Naive thymus-derived CD4-positive, alpha-beta T cell (primary cell): ENCODE measurements at regions of chr19 and their contacts with region 1.

Region 1: GRCh38 chr19:55503502-55504251 is 15.4 kb downstream of the SSC5D start:
- DNase-seq: peak; percentile 81 to 98 (median 92)
- ATAC-seq: peak; percentile 98
- H3K4me3 ChIP-seq: peak overlapping the region; percentile 79
- H3K4me3 Mint-ChIP-seq: peak overlapping the region; percentile 78 to 89 (median 84)
- H3K27ac ChIP-seq: peak overlapping the region; percentile 46
- H3K27ac Mint-ChIP-seq: peak overlapping the region; percentile 59 to 96 (median 82)
- H3K4me1 ChIP-seq: peaks cover 4% of the 10 kb centered on the region in 2 donors
- H3K4me1 Mint-ChIP-seq: peaks cover 0 to 22% (median 10%) of the 10 kb centered on the region in 7 donors
- H3K27me3 ChIP-seq: no peaks in the 10 kb centered on the region
- H3K27me3 Mint-ChIP-seq: peaks cover 0 to 8% (median 6%) of the 10 kb centered on the region in 5 donors

Region 2: GRCh38 chr19:54653181-54653809 is 850.4 kb before region 1 on chr19:
- CTCF ChIA-PET with region 1: no interaction called
- POLR2A ChIA-PET with region 1: no interaction called
- intact Hi-C with region 1: loop called in 1 of 2 experiments (anchors 5 kb)
- DNase-seq: peak in 1 of 9 donors; percentile 1
- ATAC-seq: peak; percentile 47
- H3K4me3 ChIP-seq: no peak overlapping the region
- H3K4me3 Mint-ChIP-seq: no peak overlapping the region
- H3K27ac ChIP-seq: no peak overlapping the region
- H3K27ac Mint-ChIP-seq: no peak overlapping the region
- H3K4me1 ChIP-seq: no peaks in the 10 kb centered on the region
- H3K4me1 Mint-ChIP-seq: no peaks in the 10 kb centered on the region
- H3K27me3 ChIP-seq: no peaks in the 10 kb centered on the region
- H3K27me3 Mint-ChIP-seq: peaks cover 0 to 30% (median 10%) of the 10 kb centered on the region in 5 donors

Region 3: GRCh38 chr19:55289117-55289796 is 214.4 kb before region 1 on chr19:
- CTCF ChIA-PET with region 1: interaction called, 9 read pairs
- POLR2A ChIA-PET with region 1: no interaction called
- intact Hi-C with region 1: loop called in 1 of 2 experiments (anchors 1 kb)
- DNase-seq: no peak
- ATAC-seq: no peak
- H3K4me3 ChIP-seq: no peak overlapping the region
- H3K4me3 Mint-ChIP-seq: no peak overlapping the region
- H3K27ac ChIP-seq: no peak overlapping the region
- H3K27ac Mint-ChIP-seq: no peak overlapping the region
- H3K4me1 ChIP-seq: no peaks in the 10 kb centered on the region
- H3K4me1 Mint-ChIP-seq: peaks cover 0 to 9% (median 5%) of the 10 kb centered on the region in 7 donors
- H3K27me3 ChIP-seq: no peaks in the 10 kb centered on the region
- H3K27me3 Mint-ChIP-seq: no peaks in the 10 kb centered on the region

Region 4: GRCh38 chr19:55385740-55386529 is 117.7 kb before region 1 on chr19 and contains the start of gene RPL28:
- CTCF ChIA-PET with region 1: interaction called, 5 read pairs
- POLR2A ChIA-PET with region 1: interaction called, 4 read pairs
- intact Hi-C with region 1: loop called in 1 of 2 experiments (anchors 1 kb)
- DNase-seq: peak; percentile 92 to 99 (median 99)
- ATAC-seq: peak; percentile 89
- H3K4me3 ChIP-seq: peak within 1 kb of the TSS; percentile 92
- H3K4me3 Mint-ChIP-seq: peak within 1 kb of the TSS; percentile 94 to 100 (median 100)
- H3K27ac ChIP-seq: peak within 1 kb of the TSS; percentile 91
- H3K27ac Mint-ChIP-seq: peak within 1 kb of the TSS; percentile 91 to 100 (median 99)
- H3K4me1 ChIP-seq: peaks cover 45 to 53% of the 10 kb centered on the region in 2 donors
- H3K4me1 Mint-ChIP-seq: peaks cover 41 to 79% (median 70%) of the 10 kb centered on the region in 7 donors
- H3K27me3 ChIP-seq: no peaks in the 10 kb centered on the region
- H3K27me3 Mint-ChIP-seq: peaks cover 0 to 3% (median 0%) of the 10 kb centered on the region in 5 donors
- total RNA-seq, gene RPL28: 2,549 to 3,799 (median 3,242) TPM

Region 5: GRCh38 chr19:55467236-55468053 is 36.2 kb before region 1 on chr19:
- CTCF ChIA-PET with region 1: interaction called, 33 read pairs
- POLR2A ChIA-PET with region 1: no interaction called
- intact Hi-C with region 1: loop called (anchors 1 kb)
- DNase-seq: peak in 7 of 9 donors; percentile 21 to 88 (median 54)
- ATAC-seq: peak; percentile 97
- H3K4me3 ChIP-seq: no peak overlapping the region
- H3K4me3 Mint-ChIP-seq: no peak overlapping the region
- H3K27ac ChIP-seq: no peak overlapping the region
- H3K27ac Mint-ChIP-seq: peak overlapping the region in 2 of 9 donors; percentile 25 to 59
- H3K4me1 ChIP-seq: no peaks in the 10 kb centered on the region
- H3K4me1 Mint-ChIP-seq: peaks cover under 1 to 9% (median 3%) of the 10 kb centered on the region in 7 donors
- H3K27me3 ChIP-seq: no peaks in the 10 kb centered on the region
- H3K27me3 Mint-ChIP-seq: peaks cover 0 to 3% (median 0%) of the 10 kb centered on the region in 5 donors

Region 6: GRCh38 chr19:55516878-55517620 is 13.4 kb after region 1 on chr19:
- CTCF ChIA-PET with region 1: interaction called, 14 read pairs
- POLR2A ChIA-PET with region 1: no interaction called
- intact Hi-C with region 1: no loop called
- DNase-seq: peak; percentile 77 to 94 (median 85)
- ATAC-seq: peak; percentile 100
- H3K4me3 ChIP-seq: peak overlapping the region; percentile 48
- H3K4me3 Mint-ChIP-seq: peak overlapping the region; percentile 74 to 89 (median 84)
- H3K27ac ChIP-seq: peak overlapping the region; percentile 66
- H3K27ac Mint-ChIP-seq: peak overlapping the region in 8 of 9 donors; percentile 55 to 96 (median 83)
- H3K4me1 ChIP-seq: peaks cover 3 to 4% of the 10 kb centered on the region in 2 donors
- H3K4me1 Mint-ChIP-seq: peaks cover 0 to 4% (median 4%) of the 10 kb centered on the region in 7 donors
- H3K27me3 ChIP-seq: no peaks in the 10 kb centered on the region
- H3K27me3 Mint-ChIP-seq: peaks cover 0 to 4% (median 3%) of the 10 kb centered on the region in 5 donors

Region 7: DNA sequence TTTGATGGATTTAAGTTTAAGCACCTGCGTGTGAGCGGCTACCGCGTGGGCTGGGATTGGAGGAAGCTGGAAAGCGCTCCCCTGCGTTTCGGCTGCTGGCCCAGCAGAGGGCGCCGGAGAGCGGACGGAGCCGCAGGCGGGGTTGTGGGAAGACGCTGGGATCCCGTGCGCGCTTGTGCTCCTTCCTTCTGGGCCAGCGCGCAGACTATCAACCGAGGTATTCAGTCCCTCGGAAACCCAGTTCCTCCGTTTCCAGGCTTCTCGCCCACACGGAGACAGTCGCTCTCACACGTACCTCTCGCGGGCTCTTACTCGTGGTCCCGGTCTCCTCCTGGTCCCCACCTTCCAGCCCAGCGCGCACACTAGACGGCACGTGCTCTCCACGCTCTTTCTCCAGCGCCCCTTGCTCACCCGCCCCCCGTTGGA is 200.1 kb after region 1 on chr19:
- CTCF ChIA-PET with region 1: no interaction called
- POLR2A ChIA-PET with region 1: no interaction called
- intact Hi-C with region 1: no loop called
- DNase-seq: peak in 6 of 9 donors; percentile 4 to 70 (median 26)
- ATAC-seq: peak; percentile 61
- H3K4me3 ChIP-seq: no peak overlapping the region
- H3K4me3 Mint-ChIP-seq: no peak overlapping the region
- H3K27ac ChIP-seq: no peak overlapping the region
- H3K27ac Mint-ChIP-seq: peak overlapping the region in 1 of 9 donors; percentile 10
- H3K4me1 ChIP-seq: no peaks in the 10 kb centered on the region
- H3K4me1 Mint-ChIP-seq: peaks cover 0 to 7% (median 4%) of the 10 kb centered on the region in 7 donors
- H3K27me3 ChIP-seq: no peaks in the 10 kb centered on the region
- H3K27me3 Mint-ChIP-seq: no peaks in the 10 kb centered on the region

Region 8: DNA sequence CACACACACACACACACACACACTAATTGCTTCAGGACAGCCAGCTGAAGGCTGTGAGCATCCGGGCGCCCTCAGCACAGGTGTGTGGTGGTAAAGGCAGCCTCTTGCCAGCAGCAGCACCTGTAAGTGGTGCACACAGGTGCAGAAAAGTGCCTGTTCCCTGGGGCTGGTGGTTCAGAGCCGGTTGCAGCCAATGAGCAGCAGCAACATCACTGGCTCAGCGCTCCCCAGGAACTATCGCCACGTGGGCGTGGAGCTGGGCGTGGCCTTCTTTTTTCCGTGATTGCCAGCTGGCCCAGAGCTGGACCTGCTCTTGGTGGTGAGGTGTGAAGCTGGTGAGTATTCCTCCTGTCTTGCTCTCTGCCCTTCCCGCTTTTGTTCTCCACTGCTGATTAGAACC is 482.8 kb after region 1 on chr19 and contains the start of gene NLRP5:
- CTCF ChIA-PET with region 1: no interaction called
- POLR2A ChIA-PET with region 1: no interaction called
- intact Hi-C with region 1: no loop called
- DNase-seq: no peak
- ATAC-seq: no peak
- H3K4me3 ChIP-seq: no peak within 1 kb of the TSS
- H3K4me3 Mint-ChIP-seq: no peak within 1 kb of the TSS
- H3K27ac ChIP-seq: no peak within 1 kb of the TSS
- H3K27ac Mint-ChIP-seq: no peak within 1 kb of the TSS
- H3K4me1 ChIP-seq: no peaks in the 10 kb centered on the region
- H3K4me1 Mint-ChIP-seq: peaks cover 0 to 2% (median 0%) of the 10 kb centered on the region in 7 donors
- H3K27me3 ChIP-seq: no peaks in the 10 kb centered on the region
- H3K27me3 Mint-ChIP-seq: peaks cover 0 to 5% (median 0%) of the 10 kb centered on the region in 5 donors
- total RNA-seq, gene NLRP5: not detected